Thyroid gland (tissue), 4 donors: ENCODE measurements at regions of chr17 and their contacts with region 1.

Region 1: DNA sequence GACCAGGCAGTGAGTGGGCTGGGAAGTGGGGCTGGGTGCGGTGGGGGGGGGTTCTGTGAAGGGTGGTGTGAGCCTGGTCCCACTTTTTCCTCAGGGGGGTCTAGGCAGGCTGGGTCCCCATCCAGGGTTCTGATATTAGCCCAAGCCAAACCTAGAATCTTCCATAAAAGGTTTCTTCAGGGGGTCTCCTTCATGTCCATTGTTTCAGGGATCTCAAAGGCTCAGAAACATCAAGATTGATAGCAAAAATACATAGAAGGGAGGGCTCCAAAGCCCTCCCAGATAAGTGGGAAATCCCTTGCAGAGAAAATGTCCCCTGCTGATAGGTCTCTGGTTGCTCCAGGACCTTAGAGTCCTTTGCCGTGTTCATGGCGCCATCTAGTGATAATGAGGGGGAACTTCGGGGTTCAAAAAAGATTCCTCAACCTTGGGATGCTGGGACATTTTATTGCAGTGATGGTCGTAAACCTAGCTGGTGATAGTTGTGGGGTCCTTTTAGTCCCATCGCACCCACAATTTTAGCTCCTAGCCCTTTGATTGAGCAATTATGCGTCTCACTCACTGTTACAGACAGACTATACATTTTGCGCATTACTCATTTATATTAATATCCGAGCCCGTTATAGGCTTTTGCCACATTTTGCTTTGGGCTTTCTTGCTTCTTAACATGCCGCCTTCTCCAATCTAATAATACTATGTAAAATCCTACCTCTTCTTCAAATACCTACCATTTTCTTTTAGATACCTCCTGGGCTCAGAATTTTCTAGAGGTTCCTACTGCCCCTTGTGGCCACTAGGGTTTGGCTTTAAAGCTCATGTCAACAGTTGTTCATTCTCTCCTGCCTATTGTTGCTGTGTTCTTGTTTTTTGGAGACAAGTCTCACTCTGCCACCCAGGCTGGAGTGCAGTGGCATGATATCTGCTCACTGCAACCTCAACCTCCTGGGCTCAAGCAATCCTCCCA is 35.1 kb downstream of the IGF2BP1 start:
- DNase-seq: peak; percentile 44 to 51
- H3K4me3 ChIP-seq: no peak overlapping the region
- H3K27ac ChIP-seq: no peak overlapping the region
- H3K4me1 ChIP-seq: no peaks in the 10 kb centered on the region
- H3K27me3 ChIP-seq: no peaks in the 10 kb centered on the region
- CTCF ChIP-seq: peak; percentile 39 to 86 (median 76)
- POLR2A ChIP-seq: no peak

Region 2: GRCh38 chr17:48814504-48814903 is 217.7 kb before region 1 on chr17:
- intact Hi-C with region 1: loop called (anchors 5 kb)
- DNase-seq: peak; percentile 52
- H3K4me3 ChIP-seq: no peak overlapping the region
- H3K27ac ChIP-seq: no peak overlapping the region
- H3K4me1 ChIP-seq: peaks cover 0 to 12% of the 10 kb centered on the region in 2 donors
- H3K27me3 ChIP-seq: no peaks in the 10 kb centered on the region
- CTCF ChIP-seq: peak; percentile 37 to 79 (median 58)
- POLR2A ChIP-seq: no peak

Region 3: DNA sequence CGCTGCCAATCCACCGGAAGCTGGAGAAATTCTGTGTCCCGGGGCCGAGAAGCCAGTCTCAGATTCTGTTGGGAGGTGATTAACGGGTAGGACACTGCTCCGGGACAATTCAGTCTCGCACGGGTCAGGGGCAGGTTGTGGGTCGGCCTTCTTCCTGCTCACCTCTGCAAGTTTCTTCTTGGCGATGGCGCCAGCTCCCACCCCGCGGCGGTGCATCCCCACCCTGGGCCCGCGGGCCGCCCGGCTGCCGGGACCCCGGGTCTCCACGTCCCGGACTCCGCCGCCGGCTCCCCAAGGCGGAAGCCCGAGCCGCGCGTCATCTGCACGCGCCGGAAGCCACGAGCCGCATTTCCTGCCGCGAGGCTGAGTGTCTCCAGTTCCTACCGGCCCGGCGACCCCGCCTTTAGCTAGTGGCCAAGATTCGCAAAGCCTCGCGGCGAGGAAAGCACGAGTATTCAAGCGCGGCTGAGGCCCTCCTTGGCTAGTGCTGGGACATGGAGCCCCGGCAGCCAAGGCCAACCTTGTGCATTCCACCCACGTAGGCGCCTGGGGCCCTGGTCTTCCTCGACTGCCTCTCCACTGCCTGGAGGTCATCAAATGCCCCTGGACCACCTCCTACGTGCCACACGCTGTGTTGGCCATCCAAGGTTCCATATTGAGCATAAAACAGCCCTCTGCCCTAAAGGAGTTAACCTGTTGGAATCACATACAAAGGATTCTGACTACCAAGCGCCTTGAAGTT is 87.6 kb before region 1 on chr17 and contains the start of gene SNF8:
- intact Hi-C with region 1: loop called (anchors 10 kb)
- DNase-seq: peak; percentile 90 to 94
- H3K4me3 ChIP-seq: peak within 1 kb of the TSS; percentile 27 to 61 (median 54)
- H3K27ac ChIP-seq: peak within 1 kb of the TSS; percentile 75 to 80 (median 78)
- H3K4me1 ChIP-seq: peaks cover 11 to 13% of the 10 kb centered on the region in 2 donors
- H3K27me3 ChIP-seq: no peaks in the 10 kb centered on the region
- CTCF ChIP-seq: no peak
- POLR2A ChIP-seq: peak in 1 of 2 donors; percentile 74
- total RNA-seq, gene SNF8: 64.9 to 150 (median 96.5) TPM